Vagina (tissue), 2 donors: ENCODE measurements at regions of chr10 and their contacts with region 1.

Region 1: DNA sequence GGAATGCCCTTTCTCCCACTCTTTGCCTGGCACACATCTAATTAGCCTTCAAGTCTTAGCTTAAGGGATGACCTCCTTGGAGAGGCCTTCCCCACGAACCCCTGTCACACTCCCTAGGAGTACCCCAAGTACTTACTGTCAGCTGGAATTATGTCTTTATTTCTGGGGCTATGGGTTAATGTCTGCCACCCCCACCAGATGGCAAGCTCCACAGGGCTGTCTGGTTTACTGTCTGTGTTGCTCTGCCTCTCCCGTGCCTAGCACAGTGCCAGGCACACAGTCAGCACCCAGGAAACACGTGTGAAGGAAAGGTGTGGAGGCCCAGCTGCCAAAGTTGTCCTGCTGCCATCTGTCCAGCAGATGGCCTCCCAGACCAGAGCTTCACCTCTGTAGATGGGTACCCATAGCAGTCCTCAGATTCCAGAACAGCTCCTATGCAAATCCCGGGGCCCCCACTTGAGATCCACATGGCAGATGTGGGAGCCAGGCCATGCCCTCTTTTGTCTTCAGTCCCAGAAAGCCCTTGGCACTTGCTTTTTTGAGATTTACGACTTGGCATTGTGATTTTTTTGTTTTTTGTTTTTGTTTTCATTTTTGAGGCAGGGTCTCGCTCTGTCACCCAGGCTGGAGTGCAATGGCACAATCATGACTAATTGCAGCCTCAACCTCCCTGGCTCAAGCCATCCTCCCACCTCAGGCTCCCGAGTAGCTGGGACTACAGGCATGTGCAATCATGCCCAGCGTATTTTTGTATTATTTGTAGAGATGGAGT is 17.2 kb upstream of the PALD1 start:
- DNase-seq: no peak
- H3K4me3 ChIP-seq: no peak overlapping the region
- H3K27ac ChIP-seq: no peak overlapping the region
- H3K4me1 ChIP-seq: peaks cover 30% of the 10 kb centered on the region
- H3K27me3 ChIP-seq: no peaks in the 10 kb centered on the region
- CTCF ChIP-seq: peak; percentile 60 to 71 (median 63)
- POLR2A ChIP-seq: no peak

Region 2: GRCh38 chr10:70074165-70074564 is 387.2 kb before region 1 on chr10:
- intact Hi-C with region 1: no loop called
- DNase-seq: no peak
- H3K4me3 ChIP-seq: no peak overlapping the region
- H3K27ac ChIP-seq: no peak overlapping the region
- H3K4me1 ChIP-seq: no peaks in the 10 kb centered on the region
- H3K27me3 ChIP-seq: no peaks in the 10 kb centered on the region
- CTCF ChIP-seq: no peak
- POLR2A ChIP-seq: no peak

Region 3: DNA sequence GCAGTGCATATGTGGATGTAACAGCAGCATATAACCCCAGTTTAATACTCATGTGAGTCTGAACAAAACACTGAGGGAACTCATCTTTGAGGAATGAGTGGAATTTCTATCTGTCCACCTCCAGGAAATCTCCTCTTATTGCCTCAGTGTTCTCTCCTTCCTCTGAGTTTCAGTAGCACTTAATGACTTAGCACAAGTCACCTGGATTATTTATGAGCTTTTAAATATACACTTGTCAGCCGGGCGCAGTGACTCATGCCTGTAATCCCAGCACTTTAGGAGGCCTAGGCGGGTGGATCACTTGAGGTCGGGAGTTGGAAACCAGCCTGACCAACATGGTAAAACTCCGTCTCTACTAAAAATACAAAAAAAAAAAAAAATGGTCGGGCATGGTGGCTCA is 83.3 kb before region 1 on chr10:
- intact Hi-C with region 1: no loop called
- DNase-seq: no peak
- H3K4me3 ChIP-seq: no peak overlapping the region
- H3K27ac ChIP-seq: no peak overlapping the region
- H3K4me1 ChIP-seq: peaks cover 20% of the 10 kb centered on the region
- H3K27me3 ChIP-seq: no peaks in the 10 kb centered on the region
- CTCF ChIP-seq: no peak
- POLR2A ChIP-seq: no peak

Region 4: GRCh38 chr10:70404036-70404786 is 57.2 kb before region 1 on chr10 and contains the start of gene EIF4EBP2:
- intact Hi-C with region 1: no loop called
- DNase-seq: peak; percentile 97 to 99
- H3K4me3 ChIP-seq: peak within 1 kb of the TSS; percentile 75 to 94
- H3K27ac ChIP-seq: peak within 1 kb of the TSS; percentile 95
- H3K4me1 ChIP-seq: peaks cover 33% of the 10 kb centered on the region
- H3K27me3 ChIP-seq: no peaks in the 10 kb centered on the region
- CTCF ChIP-seq: no peak
- POLR2A ChIP-seq: peak in 1 of 2 donors; percentile 97
- total RNA-seq, gene EIF4EBP2: 47.4 TPM

Region 5: DNA sequence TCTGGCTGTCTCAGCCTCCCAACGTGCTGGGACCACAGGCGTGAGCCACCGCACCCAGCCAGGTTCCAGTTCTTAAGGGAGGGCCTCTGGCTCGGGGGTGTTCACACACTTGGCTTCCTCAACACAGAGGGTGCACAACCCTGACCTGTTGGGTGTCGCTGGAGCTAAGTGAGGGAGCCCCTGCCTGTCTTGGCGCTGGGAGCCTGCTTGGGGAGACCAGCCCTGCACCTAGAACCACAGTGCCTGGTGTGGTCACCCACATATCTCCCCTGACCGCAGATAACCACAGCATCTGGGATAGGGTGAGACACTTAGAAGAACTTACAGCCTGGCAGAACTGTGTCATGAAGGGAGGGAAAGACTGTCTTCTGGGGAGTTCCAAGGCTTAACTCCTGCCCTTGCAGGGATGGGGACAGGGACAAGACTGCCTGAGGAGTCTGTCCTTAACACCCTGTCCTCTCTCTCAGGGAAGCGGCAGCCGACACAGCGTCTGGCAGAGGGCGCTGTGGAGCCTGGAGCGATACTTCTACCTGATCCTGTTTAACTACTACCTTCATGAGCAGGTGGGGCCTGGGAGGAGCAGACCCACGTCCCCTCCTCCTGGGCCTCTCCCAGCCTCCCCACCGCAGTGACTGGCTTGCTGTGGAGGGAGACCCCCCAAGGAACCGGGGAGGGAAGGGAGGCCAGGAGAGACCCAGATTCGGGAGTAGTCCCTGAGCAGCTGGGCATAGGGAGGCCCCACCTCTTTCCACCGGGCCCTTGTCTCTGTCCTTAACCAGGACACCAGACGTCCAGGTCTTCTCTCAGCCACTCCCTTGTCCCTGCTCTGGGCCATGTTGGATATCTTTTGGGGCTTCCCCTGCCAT is 76.2 kb after region 1 on chr10:
- intact Hi-C with region 1: loop called (anchors 5 kb)
- DNase-seq: no peak
- H3K4me3 ChIP-seq: no peak overlapping the region
- H3K27ac ChIP-seq: no peak overlapping the region
- H3K4me1 ChIP-seq: no peaks in the 10 kb centered on the region
- H3K27me3 ChIP-seq: no peaks in the 10 kb centered on the region
- CTCF ChIP-seq: no peak
- POLR2A ChIP-seq: no peak